Activated naive CD4-positive, alpha-beta T cell treated with anti-CD3 and anti-CD28 coated beads for 36 hours (primary cell): ENCODE measurements at regions of chr3 and their contacts with region 1.

Region 1: GRCh38 chr3:52685709-52686691 is at the starts of genes GNL3 and PBRM1:
- DNase-seq: peak; percentile 95
- H3K4me3 Mint-ChIP-seq: peak within 1 kb of the TSS; percentile 90
- H3K27ac Mint-ChIP-seq: peak within 1 kb of the TSS; percentile 91
- H3K4me1 Mint-ChIP-seq: peaks cover 72% of the 10 kb centered on the region
- H3K27me3 Mint-ChIP-seq: no peaks in the 10 kb centered on the region
- total RNA-seq, gene GNL3: 195 to 197 TPM
- total RNA-seq, gene PBRM1: 49.9 to 57.7 TPM

Region 2: DNA sequence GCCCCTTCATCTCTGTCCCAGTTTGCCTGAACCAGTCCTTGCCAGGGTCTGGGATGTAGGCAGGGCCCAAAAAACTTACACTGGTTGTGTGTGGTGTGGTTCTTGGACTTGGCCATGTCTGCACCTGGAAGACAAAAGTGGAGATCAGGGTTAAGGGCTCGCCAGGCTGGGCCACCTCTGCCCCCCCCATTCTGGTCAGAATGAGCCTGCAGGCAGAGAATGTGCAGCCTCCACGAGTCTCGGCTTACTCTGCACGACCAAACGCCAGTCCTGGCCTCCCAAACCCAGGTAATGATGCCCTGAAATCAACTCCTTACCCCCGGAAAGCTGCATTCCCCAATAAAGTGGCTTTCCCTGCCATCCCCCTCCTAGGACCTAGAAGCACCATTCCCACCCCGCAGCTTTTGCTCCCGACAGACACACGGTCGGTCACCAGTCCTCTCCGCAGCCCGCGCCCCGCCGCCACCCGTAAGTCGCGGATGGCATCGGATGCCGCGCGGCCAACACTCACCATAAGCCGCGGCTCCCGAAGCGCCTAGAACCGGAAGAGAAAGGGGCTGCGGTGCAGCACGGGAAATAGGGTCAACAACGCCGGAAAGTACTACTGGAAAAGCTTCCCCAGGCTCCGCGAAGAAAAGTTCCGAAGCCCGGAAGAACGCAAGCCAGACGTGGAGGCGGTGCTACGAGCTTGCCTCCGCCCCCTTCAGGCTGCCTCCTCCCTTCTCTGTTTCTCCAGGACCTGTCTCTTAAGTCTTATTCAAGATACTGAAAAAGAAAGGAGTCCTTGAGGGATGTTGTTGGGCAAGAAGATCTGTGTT is 690.4 kb before region 1 on chr3 and contains the start of gene RPL29:
- CTCF ChIA-PET with region 1: no interaction called
- intact Hi-C with region 1: loop called (anchors 10 kb)
- DNase-seq: peak; percentile 96
- H3K4me3 Mint-ChIP-seq: peak within 1 kb of the TSS; percentile 98
- H3K27ac Mint-ChIP-seq: peak within 1 kb of the TSS; percentile 100
- H3K4me1 Mint-ChIP-seq: peaks cover 28% of the 10 kb centered on the region
- H3K27me3 Mint-ChIP-seq: no peaks in the 10 kb centered on the region
- total RNA-seq, gene RPL29: 1,927 to 1,957 TPM

Region 3: GRCh38 chr3:52270252-52270754 is 415.7 kb before region 1 on chr3:
- CTCF ChIA-PET with region 1: no interaction called
- intact Hi-C with region 1: loop called (anchors 5 kb)
- DNase-seq: peak; percentile 41
- H3K4me3 Mint-ChIP-seq: peak overlapping the region; percentile 80
- H3K27ac Mint-ChIP-seq: peak overlapping the region; percentile 98
- H3K4me1 Mint-ChIP-seq: peaks cover 89% of the 10 kb centered on the region
- H3K27me3 Mint-ChIP-seq: no peaks in the 10 kb centered on the region

Region 4: GRCh38 chr3:52471371-52472238 is 214.4 kb before region 1 on chr3:
- CTCF ChIA-PET with region 1: no interaction called
- intact Hi-C with region 1: loop called (anchors 1 kb)
- DNase-seq: peak; percentile 55
- H3K4me3 Mint-ChIP-seq: no peak overlapping the region
- H3K27ac Mint-ChIP-seq: no peak overlapping the region
- H3K4me1 Mint-ChIP-seq: no peaks in the 10 kb centered on the region
- H3K27me3 Mint-ChIP-seq: no peaks in the 10 kb centered on the region

Region 5: DNA sequence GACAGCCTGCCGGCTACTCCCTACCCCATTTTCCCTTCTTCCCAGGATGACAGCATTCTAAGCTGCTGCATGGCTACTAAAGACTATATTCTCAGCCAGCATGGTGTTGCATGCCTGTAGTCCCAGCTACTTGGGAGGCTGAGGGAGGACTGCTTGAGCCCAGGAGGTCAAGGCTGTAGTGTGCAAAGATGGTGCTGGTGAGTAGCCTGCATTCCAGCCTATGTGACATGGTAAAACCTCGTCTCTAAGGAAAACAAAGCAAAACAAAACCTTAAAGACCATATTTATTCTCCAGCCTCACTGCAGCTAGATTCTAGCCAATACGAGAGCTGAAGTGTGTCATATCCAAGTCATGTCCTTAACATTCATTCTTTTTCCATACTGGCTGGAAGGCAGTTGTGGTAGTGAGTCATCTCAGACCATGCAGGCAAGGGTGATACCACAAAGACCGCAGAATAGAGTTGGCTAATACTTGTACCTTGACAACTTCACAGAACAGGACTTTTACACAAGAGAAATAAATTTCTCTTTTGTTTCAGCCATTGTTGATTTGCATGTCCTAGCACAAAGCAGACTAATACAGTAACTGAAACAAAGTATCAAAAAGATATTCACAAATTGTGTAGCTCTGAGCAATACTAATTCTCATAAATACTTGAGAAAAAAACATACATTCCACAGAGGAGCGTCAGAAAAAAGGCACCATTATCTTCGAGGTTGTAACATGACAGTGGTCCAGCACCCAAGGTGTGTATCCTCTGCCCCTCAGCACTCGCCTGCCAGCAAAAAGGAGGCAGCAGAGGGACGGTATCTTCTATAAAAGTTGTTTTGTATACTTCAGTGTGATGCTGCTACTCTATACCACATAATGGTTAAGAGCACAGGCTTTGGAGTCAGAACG is 15.1 kb before region 1 on chr3:
- CTCF ChIA-PET with region 1: interaction called, 6 read pairs
- intact Hi-C with region 1: loop called (anchors 1 kb)
- DNase-seq: peak; percentile 61
- H3K4me3 Mint-ChIP-seq: no peak overlapping the region
- H3K27ac Mint-ChIP-seq: peak overlapping the region; percentile 81
- H3K4me1 Mint-ChIP-seq: peaks cover 29% of the 10 kb centered on the region
- H3K27me3 Mint-ChIP-seq: no peaks in the 10 kb centered on the region

Region 6: GRCh38 chr3:52705688-52706686 is 20.0 kb after region 1 on chr3 and contains the starts of genes GLT8D1 and SPCS1:
- CTCF ChIA-PET with region 1: interaction called, 3 read pairs
- intact Hi-C with region 1: loop called (anchors 1 kb)
- DNase-seq: peak; percentile 84
- H3K4me3 Mint-ChIP-seq: peak within 1 kb of the TSS; percentile 94
- H3K27ac Mint-ChIP-seq: peak within 1 kb of the TSS; percentile 88
- H3K4me1 Mint-ChIP-seq: peaks cover 31% of the 10 kb centered on the region
- H3K27me3 Mint-ChIP-seq: no peaks in the 10 kb centered on the region
- total RNA-seq, gene GLT8D1: 24.5 to 25.4 TPM
- total RNA-seq, gene SPCS1: 118 to 123 TPM

Region 7: GRCh38 chr3:52897130-52898122 is 211.4 kb after region 1 on chr3 and contains the start of gene STIMATE:
- CTCF ChIA-PET with region 1: no interaction called
- intact Hi-C with region 1: loop called (anchors 5 kb)
- DNase-seq: peak; percentile 86
- H3K4me3 Mint-ChIP-seq: peak within 1 kb of the TSS; percentile 84
- H3K27ac Mint-ChIP-seq: no peak within 1 kb of the TSS
- H3K4me1 Mint-ChIP-seq: peaks cover 39% of the 10 kb centered on the region
- H3K27me3 Mint-ChIP-seq: no peaks in the 10 kb centered on the region
- total RNA-seq, gene STIMATE: 7.7 to 9.7 TPM